Psoas muscle (tissue), 8 donors: ENCODE measurements at regions of chr2 and their contacts with region 1.

Region 1: DNA sequence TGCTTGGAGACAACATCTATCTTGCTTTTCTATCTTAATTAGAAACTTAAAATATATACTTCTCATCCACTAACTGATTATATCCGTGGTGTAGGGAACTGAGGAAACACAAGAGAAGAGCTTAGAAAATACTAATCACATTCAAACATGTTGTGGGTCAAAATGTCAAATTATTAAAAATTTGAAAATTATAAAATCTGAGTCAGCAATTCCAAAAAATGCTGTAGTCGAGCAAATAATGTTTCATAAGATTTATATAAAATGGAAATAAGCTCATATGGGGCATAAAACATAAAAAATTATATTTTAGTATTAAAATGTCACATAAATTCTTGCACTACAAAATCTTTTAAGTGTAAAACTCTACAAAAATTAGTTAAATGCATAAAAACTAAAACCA is 29.2 kb downstream of the SF3B1 start:
- DNase-seq: no peak
- ATAC-seq: no peak
- H3K4me3 ChIP-seq: no peak overlapping the region
- H3K27ac ChIP-seq: no peak overlapping the region
- H3K4me1 ChIP-seq: no peaks in the 10 kb centered on the region
- H3K27me3 ChIP-seq: no peaks in the 10 kb centered on the region
- CTCF ChIP-seq: no peak

Region 2: DNA sequence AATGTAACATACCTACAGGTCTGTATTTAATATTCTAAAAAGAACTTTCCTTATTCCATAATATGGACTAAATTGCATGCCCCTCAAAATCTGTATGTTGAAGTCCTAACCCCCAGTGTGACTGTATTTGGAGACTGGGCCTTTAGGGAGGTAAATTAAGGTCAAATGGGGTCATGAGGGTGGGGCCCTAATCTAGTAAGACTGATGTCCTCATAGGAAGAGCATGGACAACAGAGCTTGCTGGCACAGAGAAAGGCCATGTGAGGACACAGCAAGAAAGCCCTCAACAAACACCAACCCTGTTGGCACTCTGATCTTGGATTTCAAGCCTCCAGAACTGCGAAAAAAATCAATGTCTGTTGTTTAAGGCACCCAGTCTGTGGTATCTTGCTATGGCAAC is 10.7 kb after region 1 on chr2:
- intact Hi-C with region 1: loop called (anchors 1 to 2 kb)
- DNase-seq: no peak
- ATAC-seq: no peak
- H3K4me3 ChIP-seq: no peak overlapping the region
- H3K27ac ChIP-seq: no peak overlapping the region
- H3K4me1 ChIP-seq: no peaks in the 10 kb centered on the region
- H3K27me3 ChIP-seq: no peaks in the 10 kb centered on the region
- CTCF ChIP-seq: no peak

Region 3: DNA sequence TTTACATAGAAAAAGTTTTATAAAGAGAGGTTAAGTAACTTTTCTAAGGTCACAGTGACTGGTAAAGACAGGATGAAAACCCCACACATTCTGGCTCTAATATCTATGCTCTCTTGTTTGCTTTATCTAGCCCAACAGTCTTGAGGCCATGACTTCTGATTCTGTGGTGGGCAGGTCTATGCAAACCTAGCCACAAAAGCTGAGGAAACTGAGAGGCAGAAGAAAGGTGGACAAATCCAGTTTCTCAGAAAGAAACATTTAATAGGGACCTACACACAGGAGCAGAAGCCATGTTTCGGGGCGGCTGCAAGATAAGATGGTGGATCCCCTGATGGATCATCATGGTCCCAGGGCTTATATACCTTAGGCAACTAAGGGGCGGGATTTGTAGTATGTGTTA is 72.2 kb after region 1 on chr2:
- intact Hi-C with region 1: loop called in 1 of 2 experiments (anchors 5 kb)
- DNase-seq: no peak
- ATAC-seq: no peak
- H3K4me3 ChIP-seq: no peak overlapping the region
- H3K27ac ChIP-seq: no peak overlapping the region
- H3K4me1 ChIP-seq: no peaks in the 10 kb centered on the region
- H3K27me3 ChIP-seq: no peaks in the 10 kb centered on the region
- CTCF ChIP-seq: no peak